Posterior vena cava (tissue), 2 donors: ENCODE measurements at regions of chr7 and their contacts with region 1.

Region 1: DNA sequence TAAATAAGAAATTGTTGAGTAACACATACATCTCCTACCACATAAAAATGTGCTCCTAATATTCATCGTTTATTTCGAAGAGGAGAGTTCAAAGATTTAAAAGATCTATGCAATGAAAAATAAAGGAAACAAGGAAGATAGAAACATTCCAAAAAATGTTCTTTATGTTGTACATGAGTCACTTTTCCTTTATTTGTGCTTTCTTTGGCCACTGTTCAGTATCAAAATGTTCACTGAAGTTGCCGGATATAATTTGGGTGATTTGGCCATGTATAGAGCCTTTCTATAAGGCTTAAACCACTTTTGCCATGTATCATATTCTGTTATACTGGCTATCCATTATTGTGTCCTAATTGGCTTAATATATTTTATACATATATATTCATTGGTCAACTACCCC is 62.9 kb upstream of the PRR15 start:
- DNase-seq: no peak

Region 2: GRCh38 chr7:29217113-29217512 is 283.6 kb before region 1 on chr7:
- intact Hi-C with region 1: no loop called
- DNase-seq: no peak

Region 3: GRCh38 chr7:29527505-29528108 is 26.9 kb after region 1 on chr7:
- intact Hi-C with region 1: no loop called
- DNase-seq: no peak

Region 4: DNA sequence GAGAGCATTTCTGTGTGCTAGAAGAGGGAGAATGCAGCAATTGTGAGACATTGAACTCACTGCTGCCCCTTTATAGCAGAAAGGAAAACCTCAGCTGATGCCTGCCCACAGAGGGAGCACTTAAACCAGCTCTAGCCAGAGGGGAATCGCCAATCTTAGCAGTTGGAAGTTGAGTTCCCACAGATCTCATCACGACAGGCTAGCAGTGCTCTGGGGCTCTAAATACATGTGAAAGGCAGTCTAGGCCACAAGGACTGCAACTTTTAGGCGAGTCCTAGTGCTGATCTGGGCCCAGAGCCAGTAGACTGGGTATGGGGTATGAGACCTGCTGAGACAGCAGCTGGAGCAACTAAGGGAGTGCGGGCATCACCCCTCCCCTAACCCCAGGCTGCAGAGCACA is 37.7 kb after region 1 on chr7:
- intact Hi-C with region 1: loop called in 1 of 2 experiments (anchors 5 kb)
- DNase-seq: no peak